ENCODE measurements at regions of chr16 and their contacts with region 1.

Region 1: GRCh38 chr16:77971306-77972271 is 50.8 kb upstream of the CLEC3A start:
- DNase-seq: peak; percentile 65 to 97 (median 88)

Region 2: GRCh38 chr16:77675464-77676324 is 295.9 kb before region 1 on chr16:
- intact Hi-C with region 1: loop called (anchors 1 kb)
- DNase-seq: peak in 6 of 10 donors; percentile 54 to 74 (median 62)

Region 3: GRCh38 chr16:77789085-77790008 is 182.2 kb before region 1 on chr16:
- intact Hi-C with region 1: loop called (anchors 10 kb)
- DNase-seq: no peak

Measured in posterior cingulate gyrus (tissue), 11 donors.